Activated T-helper 2 cell treated with anti-CD3 and anti-CD28 coated beads, Interferon-gamma antibody, Interleukin-2, Interleukin-4, amounts not matched to agents 10 μg/mL and 5 μg/mL and 100 μg/mL, durations not matched to agents 14 hours and 24 hours and 36 hours (primary cell): ENCODE measurements at regions of chr4 and their contacts with region 1.

Region 1: GRCh38 chr4:10730590-10730989 is 46.0 kb upstream of the CLNK start:
- DNase-seq: no peak
- H3K4me3 Mint-ChIP-seq: peak overlapping the region; percentile 17
- H3K27ac Mint-ChIP-seq: peak overlapping the region; percentile 90
- H3K4me1 Mint-ChIP-seq: peaks cover 76% of the 10 kb centered on the region
- H3K27me3 Mint-ChIP-seq: no peaks in the 10 kb centered on the region

Region 2: DNA sequence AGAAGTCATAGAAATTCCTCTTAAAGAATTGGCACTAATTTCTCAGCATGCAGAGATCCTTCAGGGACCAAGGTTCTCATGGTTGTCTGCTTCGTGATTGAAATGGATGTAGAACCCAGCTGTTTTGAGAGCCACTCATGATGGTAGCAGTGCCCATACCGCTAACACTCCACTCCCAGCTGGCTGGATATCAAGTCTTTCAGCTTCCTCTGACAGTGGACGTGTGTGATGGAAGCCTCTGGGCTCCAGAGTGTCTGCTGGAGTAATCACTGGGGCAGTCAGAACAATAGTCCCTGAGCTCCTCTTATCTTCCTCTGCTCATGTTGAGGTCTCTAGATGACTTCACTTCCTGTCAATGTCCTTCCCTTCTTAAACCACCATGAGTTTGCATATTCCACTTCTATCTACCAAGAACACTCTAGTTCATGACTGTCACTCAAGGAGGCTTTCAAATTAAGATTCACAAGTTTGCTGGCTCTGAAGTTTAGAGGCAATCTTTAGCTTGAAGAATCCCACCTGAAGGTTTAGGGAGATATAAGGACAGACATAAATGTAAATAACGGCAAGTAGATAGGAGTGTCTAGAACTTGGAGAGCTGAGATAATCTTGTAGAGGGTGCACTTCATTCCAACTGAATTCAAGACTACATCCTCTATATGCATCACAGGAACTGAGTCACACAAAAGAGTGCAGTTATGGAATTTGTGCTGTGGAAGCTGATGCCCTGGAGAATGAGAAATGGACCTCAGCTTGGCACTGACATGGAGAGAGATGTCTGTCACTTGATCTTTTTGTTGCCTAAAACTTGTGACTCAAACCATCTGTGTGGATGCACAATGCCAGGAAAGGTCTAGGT is 549.4 kb before region 1 on chr4:
- intact Hi-C with region 1: loop called (anchors 2 kb)
- DNase-seq: peak; percentile 30
- H3K4me3 Mint-ChIP-seq: no peak overlapping the region
- H3K27ac Mint-ChIP-seq: peak overlapping the region; percentile 87
- H3K4me1 Mint-ChIP-seq: peaks cover 38% of the 10 kb centered on the region
- H3K27me3 Mint-ChIP-seq: no peaks in the 10 kb centered on the region

Region 3: DNA sequence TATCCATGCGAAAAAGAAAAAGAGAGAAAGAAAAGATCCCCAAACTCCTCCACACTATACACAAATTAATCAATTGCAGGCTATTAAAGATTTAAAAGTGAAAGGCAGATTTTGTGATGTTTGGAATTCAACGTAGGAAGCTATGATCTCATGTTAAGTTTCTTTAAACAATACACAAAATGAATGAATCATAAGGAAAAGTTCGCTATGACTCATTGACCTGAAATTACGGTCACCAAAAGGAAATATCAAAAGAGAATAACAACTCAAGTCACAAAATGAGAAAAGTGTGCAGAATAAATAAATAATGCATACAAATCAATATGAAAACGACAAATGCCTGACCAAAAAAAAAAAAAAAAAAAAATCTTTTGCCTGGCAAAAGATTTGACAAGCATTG is 74.6 kb before region 1 on chr4:
- intact Hi-C with region 1: loop called (anchors 1 kb)
- DNase-seq: no peak
- H3K4me3 Mint-ChIP-seq: peak overlapping the region; percentile 55
- H3K27ac Mint-ChIP-seq: peak overlapping the region; percentile 90
- H3K4me1 Mint-ChIP-seq: peaks cover 42% of the 10 kb centered on the region
- H3K27me3 Mint-ChIP-seq: no peaks in the 10 kb centered on the region

Region 4: DNA sequence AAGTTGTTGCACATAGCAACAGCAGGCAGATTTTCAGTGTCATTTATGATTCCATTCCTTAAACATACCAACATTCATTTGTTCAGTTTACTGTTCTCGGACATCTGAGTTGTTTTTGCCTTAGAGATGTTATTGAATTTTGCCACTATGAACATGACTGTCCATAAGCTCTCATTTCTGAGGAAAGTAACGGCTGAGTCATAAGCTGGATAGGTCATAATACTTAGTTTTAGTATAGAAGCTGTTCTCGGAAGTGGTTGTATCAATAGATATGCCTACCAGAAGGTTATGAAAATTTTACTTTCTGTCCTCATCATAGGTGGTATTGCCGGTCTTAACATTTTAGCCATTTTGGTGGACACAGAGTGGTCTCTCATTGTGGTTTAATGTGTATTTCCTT is 111.1 kb after region 1 on chr4:
- intact Hi-C with region 1: loop called (anchors 5 kb)
- DNase-seq: no peak
- H3K4me3 Mint-ChIP-seq: no peak overlapping the region
- H3K27ac Mint-ChIP-seq: no peak overlapping the region
- H3K4me1 Mint-ChIP-seq: peaks cover 11% of the 10 kb centered on the region
- H3K27me3 Mint-ChIP-seq: no peaks in the 10 kb centered on the region

Region 5: DNA sequence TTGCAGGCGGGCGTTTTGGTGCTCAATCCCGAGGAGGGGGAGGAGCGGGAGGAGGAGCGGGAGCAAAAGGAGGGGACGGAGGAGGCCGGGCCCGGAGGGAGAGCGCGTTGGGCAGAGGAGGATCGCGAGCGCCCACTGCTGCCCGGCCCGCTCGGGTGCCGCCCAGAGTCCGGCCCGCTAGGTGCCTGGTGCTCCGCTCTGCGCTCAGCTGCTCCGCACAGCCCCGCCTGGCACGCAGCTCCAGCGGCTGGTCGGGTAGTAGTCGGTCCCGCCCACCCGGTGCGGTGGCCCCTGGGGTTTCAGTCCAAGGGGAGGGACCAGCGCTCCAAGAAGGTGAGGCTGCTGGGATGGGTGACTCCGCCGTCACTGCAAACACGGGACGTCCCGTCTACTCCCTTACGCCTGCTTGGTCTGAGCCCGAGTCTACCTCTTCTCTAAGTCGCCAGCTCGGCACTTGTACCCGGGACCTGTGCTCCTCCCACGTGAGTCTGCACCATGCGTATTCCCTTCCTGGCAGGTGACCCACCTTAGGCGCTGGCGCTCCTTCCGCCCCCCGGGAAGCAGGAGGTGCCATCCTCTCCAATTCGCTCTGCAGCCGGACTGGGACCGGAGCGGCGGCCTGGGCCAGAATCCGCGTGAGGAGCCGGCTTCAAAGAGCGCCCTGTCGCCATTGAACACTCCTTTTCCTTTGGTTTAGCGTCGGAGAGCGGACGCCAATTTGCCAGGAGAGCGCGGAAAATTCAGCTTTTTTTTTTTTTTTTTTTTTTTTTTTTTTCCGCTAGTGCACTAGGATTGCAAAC is 698.5 kb after region 1 on chr4:
- intact Hi-C with region 1: loop called (anchors 5 kb)
- DNase-seq: peak; percentile 18
- H3K4me3 Mint-ChIP-seq: peak overlapping the region; percentile 82
- H3K27ac Mint-ChIP-seq: no peak overlapping the region
- H3K4me1 Mint-ChIP-seq: peaks cover 10% of the 10 kb centered on the region
- H3K27me3 Mint-ChIP-seq: peaks cover 65% of the 10 kb centered on the region